ENCODE measurements at regions of chr20 and their contacts with region 1.

Region 1: GRCh38 chr20:19212821-19213502 is 520 bp downstream of the SLC24A3 start:
- DNase-seq: peak in 41 of 42 donors; percentile 45 to 89 (median 71)

Region 2: DNA sequence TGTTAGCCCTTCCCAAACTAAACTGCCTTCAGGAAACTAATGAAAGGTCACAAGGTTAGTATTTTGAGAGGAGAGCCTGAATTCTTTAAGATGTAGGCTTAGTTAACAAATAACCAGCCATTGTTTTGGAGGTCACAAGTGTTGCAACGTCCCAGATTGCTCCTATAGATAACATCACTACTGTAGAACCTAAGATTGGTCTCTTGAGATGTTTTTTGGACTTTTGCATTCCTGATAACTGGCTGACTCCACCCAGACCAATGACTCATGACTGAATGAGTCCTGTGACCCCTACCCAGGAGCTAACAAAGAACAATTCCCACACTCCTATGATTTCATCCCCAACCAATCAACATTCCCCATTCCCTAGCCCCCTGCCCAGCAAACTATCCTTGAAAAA is 220.5 kb before region 1 on chr20:
- intact Hi-C with region 1: no loop called
- DNase-seq: no peak

Region 3: DNA sequence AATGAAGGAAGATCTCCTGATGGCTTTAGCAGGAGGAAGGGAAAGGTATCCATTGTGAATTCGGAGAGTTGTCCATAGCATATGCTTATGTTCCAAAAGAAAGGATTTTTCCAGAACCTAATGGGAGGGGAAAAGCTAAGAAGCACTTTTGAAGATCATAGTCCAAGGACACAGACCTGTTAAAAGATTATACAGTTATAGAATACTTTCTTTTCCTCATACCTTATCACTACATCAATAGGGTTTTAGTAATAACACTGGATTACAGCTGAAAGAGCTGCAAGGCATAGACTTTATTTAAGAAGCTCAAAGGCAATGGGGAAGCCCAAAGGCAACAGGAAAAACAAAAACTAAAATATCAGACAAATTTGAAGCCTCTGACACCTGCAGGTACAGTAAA is 40.3 kb before region 1 on chr20:
- intact Hi-C with region 1: no loop called
- DNase-seq: no peak

Region 4: DNA sequence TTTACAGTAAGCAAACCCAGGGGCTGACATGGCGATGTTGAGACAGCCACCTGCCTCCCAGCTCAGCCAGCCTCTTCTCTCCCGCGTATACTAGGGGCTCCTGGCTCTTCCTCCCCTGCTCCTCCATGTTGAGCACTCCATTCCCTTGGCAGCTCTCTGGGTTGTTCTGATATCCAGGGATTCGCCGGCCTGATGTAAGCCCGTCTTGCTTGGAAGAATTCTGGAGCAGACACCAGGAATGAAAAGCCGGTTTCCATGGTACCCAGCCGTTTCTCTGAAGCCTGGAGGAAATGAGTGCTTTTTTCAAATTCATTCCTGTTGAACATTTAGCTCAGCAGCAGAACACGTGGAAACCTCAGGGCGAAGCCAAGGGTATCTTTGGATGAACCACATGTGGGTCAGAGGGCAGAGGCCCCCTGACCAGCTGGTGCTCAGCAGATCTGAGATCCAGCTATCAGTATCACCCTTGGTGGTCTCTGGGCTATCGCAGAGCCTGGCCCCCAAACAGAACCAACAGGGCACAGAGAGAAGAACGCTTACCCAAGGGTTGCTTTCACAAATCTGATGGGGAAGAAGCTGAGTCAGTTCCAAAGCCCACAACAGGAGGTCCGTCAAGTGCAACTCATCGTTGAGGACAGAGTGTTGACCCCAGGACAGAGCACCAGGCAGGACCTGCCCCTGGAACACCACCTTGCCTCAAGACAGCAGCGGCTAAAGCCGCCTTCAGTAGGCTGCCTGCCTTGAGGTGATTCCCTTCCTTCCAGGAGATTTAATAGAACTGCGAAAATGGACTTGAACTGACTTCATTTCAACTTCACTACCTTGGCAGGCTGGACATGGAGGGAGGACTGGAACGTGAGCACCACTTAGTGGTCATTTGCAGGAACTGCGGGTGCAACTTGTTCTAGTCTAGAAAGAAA is 449.0 kb after region 1 on chr20:
- intact Hi-C with region 1: loop called (anchors 5 kb)
- DNase-seq: peak; percentile 46 to 90 (median 74)

Measured in head of caudate nucleus (tissue), 42 donors.